Calu3 (cell line): ENCODE measurements at regions of chr17 and their contacts with region 1.

Region 1: GRCh38 chr17:65294179-65294720 is 157.1 kb downstream of the RGS9 start:
- DNase-seq: peak; percentile 50
- H3K4me3 Mint-ChIP-seq: no peak overlapping the region
- H3K27ac Mint-ChIP-seq: no peak overlapping the region
- H3K4me1 Mint-ChIP-seq: no peaks in the 10 kb centered on the region
- H3K27me3 Mint-ChIP-seq: peaks cover 38% of the 10 kb centered on the region
- CTCF ChIP-seq: peak; percentile 53

Region 2: GRCh38 chr17:65261682-65262636 is 32.3 kb before region 1 on chr17:
- CTCF ChIA-PET with region 1: no interaction called
- intact Hi-C with region 1: no loop called
- DNase-seq: no peak
- H3K4me3 Mint-ChIP-seq: no peak overlapping the region
- H3K27ac Mint-ChIP-seq: no peak overlapping the region
- H3K4me1 Mint-ChIP-seq: no peaks in the 10 kb centered on the region
- H3K27me3 Mint-ChIP-seq: peaks cover 65% of the 10 kb centered on the region
- CTCF ChIP-seq: no peak

Region 3: GRCh38 chr17:65446838-65447526 is 152.7 kb after region 1 on chr17:
- CTCF ChIA-PET with region 1: no interaction called
- intact Hi-C with region 1: loop called (anchors 10 kb)
- DNase-seq: no peak
- H3K4me3 Mint-ChIP-seq: no peak overlapping the region
- H3K27ac Mint-ChIP-seq: no peak overlapping the region
- H3K4me1 Mint-ChIP-seq: no peaks in the 10 kb centered on the region
- H3K27me3 Mint-ChIP-seq: peaks cover 85% of the 10 kb centered on the region
- CTCF ChIP-seq: no peak

Region 4: DNA sequence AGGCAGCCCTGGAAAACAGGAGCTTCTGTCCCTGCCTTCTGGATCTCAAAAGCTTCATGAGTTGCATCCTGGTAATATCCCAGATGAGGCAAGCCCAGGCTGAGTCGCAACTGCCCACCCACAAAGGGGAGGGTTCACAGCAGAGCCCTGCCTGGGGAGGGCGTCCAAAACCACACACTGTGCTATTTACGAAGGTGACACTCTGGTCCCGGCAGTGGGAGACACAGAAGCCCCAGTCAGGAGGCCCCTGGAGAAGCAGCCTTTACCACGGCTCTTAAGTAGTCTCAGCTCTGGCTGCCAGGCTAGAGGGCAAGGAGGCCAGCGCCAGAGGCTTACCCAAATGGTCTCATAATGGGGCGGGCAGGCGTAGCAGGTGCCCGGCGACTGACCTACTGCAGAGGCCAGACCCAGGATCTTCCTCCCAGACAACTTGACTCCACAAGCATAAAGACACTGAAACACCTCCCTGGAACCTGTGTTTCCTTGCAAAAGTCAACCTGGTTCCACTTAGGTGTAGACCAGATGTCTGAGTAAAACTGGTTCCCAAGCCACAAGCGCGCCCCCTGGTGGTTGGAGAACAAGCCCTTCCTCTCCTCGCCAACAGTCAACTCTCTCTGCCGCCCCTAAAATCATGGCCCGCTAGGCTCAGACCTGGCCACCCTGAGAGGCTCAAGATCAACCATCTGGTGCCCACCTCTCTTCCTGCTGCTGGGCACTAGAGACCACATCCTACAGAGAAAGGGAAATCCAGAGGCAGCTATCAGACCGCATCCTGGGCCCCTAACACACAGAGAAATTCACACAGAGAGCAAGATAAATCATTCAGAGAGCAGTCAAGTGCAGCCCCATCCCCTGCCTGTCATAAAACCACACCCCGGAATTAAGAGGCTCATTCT is 262.0 kb after region 1 on chr17:
- CTCF ChIA-PET with region 1: no interaction called
- intact Hi-C with region 1: loop called (anchors 2 kb)
- DNase-seq: peak; percentile 85
- H3K4me3 Mint-ChIP-seq: no peak overlapping the region
- H3K27ac Mint-ChIP-seq: no peak overlapping the region
- H3K4me1 Mint-ChIP-seq: no peaks in the 10 kb centered on the region
- H3K27me3 Mint-ChIP-seq: peaks cover 27% of the 10 kb centered on the region
- CTCF ChIP-seq: peak; percentile 72

Region 5: GRCh38 chr17:66165513-66166123 is 871.4 kb after region 1 on chr17:
- CTCF ChIA-PET with region 1: no interaction called
- intact Hi-C with region 1: loop called (anchors 10 kb)
- DNase-seq: peak; percentile 38
- H3K4me3 Mint-ChIP-seq: no peak overlapping the region
- H3K27ac Mint-ChIP-seq: no peak overlapping the region
- H3K4me1 Mint-ChIP-seq: no peaks in the 10 kb centered on the region
- H3K27me3 Mint-ChIP-seq: no peaks in the 10 kb centered on the region
- CTCF ChIP-seq: peak; percentile 14